ENCODE measurements at regions of chr10 and their contacts with region 1.

Region 1: GRCh38 chr10:71812016-71812912 is 38.8 kb downstream of the PSAP start:
- DNase-seq: no peak
- H3K4me3 ChIP-seq: no peak overlapping the region
- H3K27ac ChIP-seq: no peak overlapping the region
- H3K4me1 ChIP-seq: peaks cover 14% of the 10 kb centered on the region
- H3K27me3 ChIP-seq: no peaks in the 10 kb centered on the region
- CTCF ChIP-seq: peak in 2 of 3 experiments; percentile 81 to 85
- POLR2A ChIP-seq: no peak

Region 2: DNA sequence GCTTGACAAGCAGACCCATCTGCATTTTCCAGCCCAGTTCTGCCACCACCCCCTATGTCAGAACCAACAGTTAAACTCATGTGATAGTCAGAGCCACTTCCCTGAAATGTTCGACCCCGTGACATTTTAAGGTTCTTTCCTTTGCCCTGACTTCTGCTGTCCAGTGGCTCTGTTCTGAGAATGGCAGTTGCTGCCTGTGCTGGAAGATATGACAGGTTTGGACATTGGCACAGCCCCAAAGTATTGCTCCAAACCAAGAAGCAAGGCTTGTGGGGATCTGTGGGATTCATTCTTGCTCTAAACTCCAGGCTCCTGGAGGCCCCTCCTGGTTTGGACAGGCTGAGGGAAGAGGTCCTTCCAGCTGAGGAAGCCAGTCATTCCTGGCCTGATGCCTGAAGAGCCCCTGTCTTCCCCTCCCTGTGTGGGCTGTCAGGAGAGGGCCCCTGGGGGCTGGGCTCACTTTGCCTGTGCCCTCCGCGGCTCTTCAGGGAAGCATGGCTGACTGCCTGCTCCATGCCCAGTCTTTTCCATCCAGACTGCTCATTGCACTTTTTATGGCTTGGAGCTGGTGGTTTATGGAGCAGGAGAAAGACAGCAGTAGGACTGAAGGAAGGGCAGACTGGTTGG is 277.6 kb before region 1 on chr10:
- intact Hi-C with region 1: no loop called
- DNase-seq: no peak
- H3K4me3 ChIP-seq: no peak overlapping the region
- H3K27ac ChIP-seq: no peak overlapping the region
- H3K4me1 ChIP-seq: peaks cover 5% of the 10 kb centered on the region
- H3K27me3 ChIP-seq: no peaks in the 10 kb centered on the region
- CTCF ChIP-seq: no peak
- POLR2A ChIP-seq: no peak

Region 3: DNA sequence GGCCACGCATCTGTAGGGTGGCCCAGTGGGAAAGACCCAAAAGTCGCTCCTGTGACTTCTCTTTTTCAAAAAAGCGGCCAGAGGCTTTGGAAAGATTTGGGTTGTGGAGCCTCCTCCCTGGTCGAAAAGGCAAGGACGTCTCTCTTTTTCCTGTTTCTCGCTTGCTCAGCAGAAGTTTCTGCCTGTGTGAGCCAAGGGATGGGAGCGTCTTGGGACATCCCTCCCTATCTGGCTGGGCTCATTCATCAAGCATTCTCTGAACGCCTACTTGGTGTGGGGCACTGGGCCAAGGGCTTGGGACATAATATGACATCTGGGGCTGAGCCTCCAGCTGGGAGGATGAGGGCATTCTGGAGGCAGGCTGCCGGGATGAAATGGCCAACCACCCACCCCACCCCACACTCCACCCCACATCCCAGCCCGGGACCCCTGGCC is 213.6 kb before region 1 on chr10:
- intact Hi-C with region 1: no loop called
- DNase-seq: no peak
- H3K4me3 ChIP-seq: no peak overlapping the region
- H3K27ac ChIP-seq: peak overlapping the region; percentile 86
- H3K4me1 ChIP-seq: peaks cover 27% of the 10 kb centered on the region
- H3K27me3 ChIP-seq: no peaks in the 10 kb centered on the region
- CTCF ChIP-seq: no peak
- POLR2A ChIP-seq: no peak

Region 4: GRCh38 chr10:71860243-71861029 is 48.2 kb after region 1 on chr10:
- intact Hi-C with region 1: no loop called
- DNase-seq: peak in 1 of 2 donors; percentile 100
- H3K4me3 ChIP-seq: no peak overlapping the region
- H3K27ac ChIP-seq: peak overlapping the region; percentile 85
- H3K4me1 ChIP-seq: peaks cover 27% of the 10 kb centered on the region
- H3K27me3 ChIP-seq: no peaks in the 10 kb centered on the region
- CTCF ChIP-seq: no peak
- POLR2A ChIP-seq: no peak

Region 5: GRCh38 chr10:71893920-71894319 is 81.7 kb after region 1 on chr10:
- intact Hi-C with region 1: loop called (anchors 10 kb)
- DNase-seq: no peak
- H3K4me3 ChIP-seq: no peak overlapping the region
- H3K27ac ChIP-seq: no peak overlapping the region
- H3K4me1 ChIP-seq: peaks cover 31% of the 10 kb centered on the region
- H3K27me3 ChIP-seq: no peaks in the 10 kb centered on the region
- CTCF ChIP-seq: no peak
- POLR2A ChIP-seq: no peak

Measured in vagina (tissue), 2 donors.